ENCODE measurements at regions of chr9 and their contacts with region 1.

Region 1: DNA sequence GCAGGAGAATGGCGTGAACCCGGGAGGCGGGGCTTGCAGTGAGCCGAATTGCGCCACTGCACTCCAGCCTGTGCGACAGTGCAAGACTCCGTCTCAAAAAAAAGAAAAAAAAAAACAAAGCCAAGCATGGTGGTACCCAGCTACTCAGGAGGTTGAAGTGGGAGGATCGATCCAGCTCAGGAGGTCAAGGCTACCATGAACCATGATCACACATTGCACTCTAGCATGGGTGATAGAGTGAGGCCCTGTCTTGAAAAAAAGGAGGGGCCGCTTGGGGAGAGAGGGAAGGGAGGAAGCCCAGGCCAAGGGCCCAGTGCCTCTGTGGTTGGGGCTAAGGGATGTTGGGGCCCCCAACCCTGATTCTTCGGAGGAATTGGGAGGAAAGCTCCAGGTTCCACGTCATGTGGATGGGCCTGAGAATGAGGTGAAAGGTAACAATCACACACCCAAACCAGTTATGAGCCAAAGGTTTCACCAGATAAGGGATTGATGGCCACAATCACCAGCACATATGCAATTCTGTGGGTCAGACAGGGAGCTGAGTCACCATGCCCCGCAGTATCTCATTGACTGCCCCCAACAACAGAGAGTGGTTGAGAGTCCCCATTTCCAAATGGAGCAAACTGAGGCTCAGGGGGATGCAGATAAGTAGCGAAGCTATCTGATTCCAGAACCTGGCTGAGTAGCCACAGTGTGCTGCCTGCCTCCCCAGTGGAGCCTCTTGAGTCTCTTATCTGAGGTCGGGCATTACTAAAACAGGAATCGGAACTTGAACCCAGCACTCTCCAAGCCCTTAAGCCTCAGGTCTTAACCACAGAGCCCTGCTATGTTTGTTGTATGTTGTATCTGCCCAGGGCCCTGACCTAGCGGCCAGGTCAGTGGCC is 20.5 kb downstream of the SWI5 start:
- DNase-seq: no peak
- H3K4me3 ChIP-seq: no peak overlapping the region
- H3K27ac ChIP-seq: no peak overlapping the region
- H3K4me1 ChIP-seq: no peaks in the 10 kb centered on the region
- H3K27me3 ChIP-seq: no peaks in the 10 kb centered on the region
- CTCF ChIP-seq: no peak
- POLR2A ChIP-seq: no peak

Region 2: DNA sequence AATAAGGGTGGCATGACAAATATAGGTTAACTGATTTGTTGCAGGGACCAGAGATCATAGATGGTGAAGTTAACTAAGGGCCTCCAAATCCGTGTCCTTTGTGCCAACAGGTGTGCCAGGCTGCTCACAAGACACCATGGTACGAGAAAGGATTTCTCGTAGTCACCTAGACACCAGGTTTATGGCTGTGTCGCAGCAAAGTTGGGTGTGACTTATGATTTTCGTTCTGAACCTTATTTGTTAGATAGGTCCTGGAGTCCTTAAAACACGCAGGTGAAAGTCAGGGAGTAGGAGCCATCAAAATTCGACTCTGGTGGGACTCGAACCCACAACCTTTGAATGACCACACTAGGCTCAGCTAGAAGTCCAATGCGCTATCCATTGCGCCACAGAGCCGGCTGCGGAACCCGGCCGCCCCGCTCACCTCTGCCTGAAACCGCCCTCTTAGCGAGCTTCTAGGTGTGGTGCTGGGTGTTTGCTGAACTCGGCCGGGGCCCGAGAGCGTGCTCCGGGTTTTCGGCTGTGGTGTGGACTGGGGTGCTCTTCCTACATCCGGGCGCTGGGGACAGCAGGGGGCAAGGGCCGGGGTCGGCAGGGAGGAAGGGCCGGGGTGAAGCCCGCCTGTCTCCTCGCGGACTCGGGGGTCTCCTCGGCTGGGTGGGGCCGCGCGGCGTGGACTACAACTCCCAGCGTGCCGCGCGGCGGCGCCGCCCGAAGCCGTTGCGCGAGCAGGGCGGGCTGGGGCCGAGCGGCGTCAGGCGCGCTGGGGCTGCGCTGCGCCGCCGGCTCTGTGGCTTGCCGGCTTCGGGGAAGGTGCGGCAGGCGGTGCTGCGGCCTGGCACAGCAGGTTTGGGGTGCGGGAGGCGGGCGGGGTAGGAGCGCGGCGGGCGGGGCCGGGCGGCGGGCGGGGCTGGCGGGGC is 43.5 kb after region 1 on chr9 and contains the start of gene SLC27A4:
- intact Hi-C with region 1: loop called (anchors 5 to 10 kb)
- DNase-seq: peak; percentile 69 to 81 (median 72)
- H3K4me3 ChIP-seq: peak within 1 kb of the TSS in 2 of 4 donors; percentile 68 to 91
- H3K27ac ChIP-seq: peak within 1 kb of the TSS in 3 of 5 donors; percentile 18 to 91 (median 60)
- H3K4me1 ChIP-seq: peaks cover 0 to 9% of the 10 kb centered on the region in 2 donors
- H3K27me3 ChIP-seq: no peaks in the 10 kb centered on the region
- CTCF ChIP-seq: peak in 1 of 6 experiments; percentile 25
- POLR2A ChIP-seq: peak in 1 of 2 donors; percentile 36
- total RNA-seq, gene SLC27A4: 6.6 to 30.3 (median 19.9) TPM

Region 3: DNA sequence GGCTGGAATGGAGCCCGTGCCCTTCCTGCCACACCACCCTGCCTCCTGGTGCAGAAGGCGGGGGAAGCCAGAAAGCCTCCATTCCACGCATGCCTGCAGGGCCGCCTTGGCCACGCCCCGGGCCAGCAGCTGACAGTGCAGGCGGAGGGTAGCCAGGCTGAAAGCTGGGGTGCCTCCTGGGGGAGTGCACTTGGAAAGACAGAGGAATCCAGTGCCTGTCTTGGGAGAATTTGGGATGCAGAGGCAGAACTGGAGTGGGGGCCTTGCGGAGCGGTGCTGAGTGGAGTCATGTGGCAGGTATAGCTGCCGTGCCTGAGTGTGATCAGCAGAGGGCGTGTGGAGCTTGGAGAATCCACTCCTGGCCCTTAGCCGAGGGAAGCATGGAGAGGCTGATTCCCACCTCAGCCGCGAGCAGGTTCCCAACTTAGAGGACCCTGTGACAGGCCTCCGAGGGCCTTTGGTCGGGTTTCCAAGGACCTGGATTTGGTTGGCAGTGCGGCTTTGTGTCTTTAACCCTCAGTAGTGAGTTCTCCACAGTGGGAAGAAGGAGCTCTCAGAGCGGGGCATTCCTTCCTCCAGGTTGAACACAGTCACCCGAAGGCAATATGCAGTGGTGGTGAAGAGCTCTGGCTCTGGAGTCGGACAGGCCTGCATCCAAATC is 65.5 kb after region 1 on chr9:
- intact Hi-C with region 1: no loop called
- DNase-seq: peak; percentile 83 to 94 (median 91)
- H3K4me3 ChIP-seq: peak overlapping the region in 2 of 4 donors; percentile 38 to 55
- H3K27ac ChIP-seq: peak overlapping the region in 2 of 5 donors; percentile 55 to 77
- H3K4me1 ChIP-seq: peaks cover 4 to 22% of the 10 kb centered on the region in 2 donors
- H3K27me3 ChIP-seq: no peaks in the 10 kb centered on the region
- CTCF ChIP-seq: peak; percentile 70 to 95 (median 92)
- POLR2A ChIP-seq: no peak

Measured in adrenal gland (tissue), 19 donors.